Ovary (tissue), 10 donors: ENCODE measurements at regions of chr2 and their contacts with region 1.

Region 1: DNA sequence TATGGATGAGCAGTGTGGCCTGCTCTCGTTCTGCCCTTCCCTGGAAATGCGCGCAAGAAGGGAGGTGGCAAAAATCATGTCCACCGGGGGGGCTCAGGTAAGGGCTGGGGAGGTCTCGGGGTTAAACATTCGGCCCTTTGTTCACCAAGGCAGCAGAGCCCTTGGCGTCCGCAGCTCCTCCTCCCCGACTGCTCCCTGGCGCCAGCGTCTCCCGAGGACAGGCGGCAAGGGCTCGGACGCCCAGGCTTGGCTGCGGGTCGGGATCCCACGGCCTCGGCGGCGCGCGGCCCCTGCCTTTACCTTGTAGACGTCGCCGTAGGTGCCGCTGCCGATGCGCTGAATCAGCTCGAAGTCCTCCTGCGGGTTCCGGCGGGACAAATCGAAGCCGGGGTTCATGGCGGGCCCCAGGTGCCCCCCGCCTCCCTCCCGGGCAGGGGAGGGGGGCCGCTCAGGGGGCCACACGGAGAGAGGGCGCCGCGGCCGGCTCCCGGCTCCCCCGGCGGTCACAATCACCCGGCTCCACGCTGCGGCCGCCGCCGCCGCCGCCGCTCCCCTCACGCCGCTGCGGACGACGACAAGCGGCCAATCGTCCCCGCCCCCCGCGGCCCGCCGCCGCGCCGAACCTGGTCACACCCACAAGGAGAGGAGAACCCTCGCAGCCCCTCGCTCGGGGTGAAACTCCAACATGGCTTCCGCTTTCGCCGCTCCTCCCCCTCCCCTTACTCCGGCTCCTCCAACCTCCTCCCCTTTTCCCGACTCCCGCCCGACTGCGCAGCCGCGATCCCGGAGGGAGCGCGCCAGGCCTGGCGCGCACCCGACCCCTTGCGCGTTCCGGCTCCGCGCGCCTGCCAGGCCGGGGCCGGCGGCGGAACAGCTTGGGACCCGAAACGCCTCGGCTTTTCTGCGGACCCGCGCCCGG is at the start of gene MAP4K3:
- DNase-seq: peak; percentile 93 to 95 (median 94)
- H3K4me3 ChIP-seq: peak within 1 kb of the TSS; percentile 90
- H3K27ac ChIP-seq: peak within 1 kb of the TSS; percentile 95 to 99
- H3K4me1 ChIP-seq: peaks cover 8% of the 10 kb centered on the region
- H3K27me3 ChIP-seq: no peaks in the 10 kb centered on the region
- CTCF ChIP-seq: no peak
- EP300 ChIP-seq: no peak
- POLR2A ChIP-seq: peak; percentile 84
- total RNA-seq, gene MAP4K3: 42.0 to 96.4 (median 55.0) TPM

Region 2: DNA sequence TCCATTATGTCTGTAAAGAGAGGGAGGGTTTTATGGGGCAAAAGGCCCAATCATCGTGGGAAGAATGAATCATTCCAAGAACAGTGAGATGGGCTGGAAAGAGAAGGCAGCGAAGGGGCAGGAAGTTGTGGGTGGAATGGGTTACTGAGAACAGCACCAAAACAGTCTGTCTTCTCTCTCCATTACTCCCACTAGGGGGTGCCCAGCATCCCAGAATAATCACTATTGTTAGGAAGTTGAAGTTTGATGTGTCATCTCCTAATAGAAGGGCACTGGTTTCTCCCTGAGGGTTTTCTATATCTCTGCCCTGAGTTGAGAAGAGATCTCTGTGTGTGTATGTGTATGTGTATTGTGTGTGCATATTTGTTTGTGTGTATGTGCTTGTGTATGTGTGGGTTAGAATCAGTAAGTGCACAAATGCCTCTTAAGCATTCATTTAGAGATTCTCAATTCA is 76.8 kb after region 1 on chr2:
- intact Hi-C with region 1: loop called in 2 of 4 experiments (anchors 5 to 10 kb)
- DNase-seq: peak in 4 of 5 donors; percentile 44 to 69 (median 55)
- H3K4me3 ChIP-seq: no peak overlapping the region
- H3K27ac ChIP-seq: peak overlapping the region in 1 of 2 donors; percentile 69
- H3K4me1 ChIP-seq: peaks cover 11% of the 10 kb centered on the region
- H3K27me3 ChIP-seq: no peaks in the 10 kb centered on the region
- CTCF ChIP-seq: peak in 1 of 3 donors; percentile 44
- EP300 ChIP-seq: no peak
- POLR2A ChIP-seq: no peak